ENCODE measurements at regions of chr6 and their contacts with region 1.

Region 1: DNA sequence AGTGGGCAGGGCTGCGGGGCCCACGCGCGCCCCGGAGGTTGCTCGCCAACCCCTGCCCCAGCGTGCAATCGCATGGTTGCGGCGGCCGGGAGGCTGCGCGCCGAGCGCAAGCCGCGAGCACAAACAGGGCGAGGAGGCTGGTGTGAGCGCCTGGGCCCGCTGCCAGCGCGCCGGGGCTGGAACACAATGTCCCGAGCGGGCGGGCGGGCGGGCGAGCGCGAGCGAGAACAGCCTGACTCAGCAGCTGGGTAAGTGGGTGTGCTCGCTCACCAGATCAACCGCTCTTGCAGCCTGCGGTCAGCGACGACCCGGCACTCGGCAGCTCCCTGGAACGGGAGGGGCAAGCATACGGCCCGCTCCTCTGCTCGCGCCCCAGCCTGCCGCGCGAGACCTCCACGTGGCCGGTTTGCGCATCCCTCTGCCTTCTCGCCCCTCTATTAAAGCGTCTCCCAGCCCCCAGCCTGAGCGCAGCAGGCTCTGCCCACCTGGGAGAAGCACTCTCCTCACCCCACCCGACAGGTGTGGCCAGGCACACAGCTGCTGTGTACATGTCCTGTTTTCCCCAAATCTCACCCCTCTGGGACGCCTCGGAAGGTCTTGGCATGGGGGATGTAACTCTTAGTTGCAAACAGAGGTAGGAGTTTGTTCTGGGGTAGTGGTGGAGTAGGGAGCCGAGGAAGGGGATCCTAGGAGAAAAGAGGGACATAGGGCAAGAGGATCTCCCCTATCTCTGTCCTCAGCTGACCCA is 8.7 kb upstream of the ARMC12 start:
- DNase-seq: peak; percentile 98
- ATAC-seq: peak; percentile 75
- H3K4me3 ChIP-seq: peak overlapping the region; percentile 55
- H3K27ac ChIP-seq: peak overlapping the region; percentile 99
- H3K4me1 ChIP-seq: peaks cover 78% of the 10 kb centered on the region
- H3K27me3 ChIP-seq: no peaks in the 10 kb centered on the region
- CTCF ChIP-seq: peak; percentile 33

Region 2: GRCh38 chr6:35688581-35689322 is 39.4 kb before region 1 on chr6 and contains the start of gene FKBP5:
- intact Hi-C with region 1: loop called (anchors 5 kb)
- DNase-seq: peak; percentile 98
- ATAC-seq: peak; percentile 94
- H3K4me3 ChIP-seq: peak within 1 kb of the TSS; percentile 89
- H3K27ac ChIP-seq: peak within 1 kb of the TSS; percentile 95
- H3K4me1 ChIP-seq: peaks cover 37% of the 10 kb centered on the region
- H3K27me3 ChIP-seq: no peaks in the 10 kb centered on the region
- CTCF ChIP-seq: no peak
- total RNA-seq, gene FKBP5: 142 TPM

Region 3: DNA sequence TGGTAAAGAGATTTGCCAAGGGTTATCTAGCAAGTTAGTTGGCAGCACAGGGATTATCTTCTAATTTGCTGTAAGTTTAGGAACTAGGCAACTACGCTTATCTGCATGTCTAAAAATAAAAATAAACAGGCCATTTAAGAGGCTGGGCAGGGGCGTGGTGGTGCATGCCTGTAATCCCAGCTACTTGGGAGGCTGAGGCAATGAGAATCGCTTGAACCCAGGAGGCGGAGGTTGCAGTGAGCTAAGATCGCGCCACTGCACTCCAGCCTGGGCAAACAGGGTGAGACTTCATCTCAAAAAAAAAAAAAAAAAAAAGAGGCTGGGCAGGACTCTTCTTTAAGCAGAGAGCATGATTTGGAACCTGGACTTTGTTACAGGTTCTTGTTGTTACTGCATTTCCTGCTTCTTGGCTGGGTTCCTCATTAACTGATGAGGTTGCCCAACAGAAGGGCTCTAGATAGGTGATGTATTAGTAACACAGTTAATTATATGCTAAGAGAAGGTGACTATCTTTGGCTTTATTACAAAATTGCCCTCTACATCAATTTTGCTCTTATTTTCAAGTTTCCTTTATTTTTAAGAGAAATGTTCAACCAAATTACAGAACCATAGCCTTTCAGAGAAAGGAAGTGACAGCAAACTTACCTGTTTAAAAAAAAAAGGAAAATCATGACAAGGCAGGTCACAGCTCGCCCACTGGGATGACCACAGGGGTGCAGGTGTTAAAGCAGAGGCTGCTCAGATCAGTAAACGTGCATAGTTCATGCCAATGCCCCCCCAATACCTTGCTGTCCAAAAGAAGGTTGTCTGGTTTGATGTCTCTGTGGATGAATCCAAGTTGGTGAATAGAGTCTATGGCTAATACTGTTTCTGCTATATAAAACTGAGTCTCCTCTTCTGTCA is 786.7 kb after region 1 on chr6:
- intact Hi-C with region 1: no loop called
- DNase-seq: no peak
- ATAC-seq: no peak
- H3K4me3 ChIP-seq: no peak overlapping the region
- H3K27ac ChIP-seq: no peak overlapping the region
- H3K4me1 ChIP-seq: no peaks in the 10 kb centered on the region
- H3K27me3 ChIP-seq: no peaks in the 10 kb centered on the region
- CTCF ChIP-seq: no peak

Region 4: DNA sequence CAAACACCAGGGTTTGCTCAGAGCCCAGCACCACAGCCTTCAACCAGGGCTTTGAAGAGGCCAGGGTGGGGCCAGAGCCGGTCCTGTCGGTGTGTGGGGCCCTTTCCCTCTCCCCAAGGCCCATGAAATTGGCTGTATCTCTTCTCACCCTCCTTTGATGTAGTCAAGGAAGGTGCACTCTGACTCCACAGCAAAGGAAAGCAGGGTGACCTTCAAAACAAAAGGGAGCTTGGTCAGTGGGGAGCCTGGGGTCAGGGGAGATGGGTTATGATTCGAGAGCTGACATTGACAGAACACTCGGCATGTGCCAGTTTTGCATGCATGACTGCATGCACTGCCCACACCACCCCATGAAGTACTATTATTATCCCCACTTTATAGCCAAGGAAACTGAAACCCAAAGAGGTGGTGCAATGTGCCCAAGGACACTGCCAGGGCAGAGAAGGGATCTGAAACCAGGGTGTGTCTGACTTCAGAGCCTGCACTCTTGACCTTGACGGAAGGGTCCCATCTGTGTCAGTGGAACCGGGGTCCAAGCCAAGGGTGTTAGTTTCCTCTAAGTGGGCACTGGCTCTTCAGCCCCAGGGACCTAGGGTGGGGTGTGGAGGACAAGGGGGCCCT is 1024.9 kb after region 1 on chr6:
- intact Hi-C with region 1: no loop called
- DNase-seq: no peak
- ATAC-seq: peak; percentile 85
- H3K4me3 ChIP-seq: no peak overlapping the region
- H3K27ac ChIP-seq: no peak overlapping the region
- H3K4me1 ChIP-seq: peaks cover 12% of the 10 kb centered on the region
- H3K27me3 ChIP-seq: no peaks in the 10 kb centered on the region
- CTCF ChIP-seq: no peak